ENCODE measurements at regions of chr5 and their contacts with region 1.

Region 1: GRCh38 chr5:158061451-158061850 is 202.5 kb upstream of the CLINT1 start:
- DNase-seq: no peak
- H3K4me3 Mint-ChIP-seq: no peak overlapping the region
- H3K27ac Mint-ChIP-seq: no peak overlapping the region
- H3K4me1 Mint-ChIP-seq: no peaks in the 10 kb centered on the region
- H3K27me3 Mint-ChIP-seq: peaks cover 14% of the 10 kb centered on the region

Region 2: GRCh38 chr5:158074992-158075769 is 13.7 kb after region 1 on chr5:
- CTCF ChIA-PET with region 1: interaction called, 14 read pairs
- POLR2A ChIA-PET with region 1: interaction called, 3 read pairs
- DNase-seq: peak; percentile 46
- H3K4me3 Mint-ChIP-seq: no peak overlapping the region
- H3K27ac Mint-ChIP-seq: no peak overlapping the region
- H3K4me1 Mint-ChIP-seq: no peaks in the 10 kb centered on the region
- H3K27me3 Mint-ChIP-seq: peaks cover 26% of the 10 kb centered on the region

Measured in activated CD4-positive, alpha-beta memory T cell treated with anti-CD3 and anti-CD28 coated beads, Interleukin-2, amount 10 ng/mL, durations not matched to agents 7 days and 5 days (primary cell).